Spleen (tissue), 13 donors: ENCODE measurements at regions of chr9 and their contacts with region 1.

Region 1: DNA sequence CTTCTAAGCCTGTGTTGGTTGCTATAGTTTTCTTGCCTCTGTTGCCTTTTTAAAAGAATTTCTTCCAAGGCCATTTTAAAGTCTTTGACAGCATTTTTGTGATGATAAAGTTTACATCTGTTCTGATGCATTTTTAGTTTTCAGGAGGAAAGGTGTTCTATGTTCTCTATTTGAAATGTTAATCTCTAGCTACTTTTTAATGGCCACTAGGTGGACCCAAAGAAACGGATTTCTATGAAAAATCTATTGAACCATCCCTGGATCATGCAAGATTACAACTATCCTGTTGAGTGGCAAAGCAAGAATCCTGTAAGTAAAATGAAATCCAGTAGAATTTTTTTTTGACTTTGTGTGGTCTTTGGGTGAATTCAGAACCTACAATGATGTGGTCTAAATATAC is 60.2 kb downstream of the MELK start:
- DNase-seq: no peak
- H3K4me3 ChIP-seq: no peak overlapping the region
- H3K27ac ChIP-seq: no peak overlapping the region
- H3K4me1 ChIP-seq: no peaks in the 10 kb centered on the region
- H3K27me3 ChIP-seq: no peaks in the 10 kb centered on the region
- CTCF ChIP-seq: peak in 8 of 11 experiments; percentile 17 to 51 (median 40)
- POLR2A ChIP-seq: no peak

Region 2: GRCh38 chr9:36543916-36544315 is 89.0 kb before region 1 on chr9:
- intact Hi-C with region 1: no loop called
- DNase-seq: no peak
- H3K4me3 ChIP-seq: no peak overlapping the region
- H3K27ac ChIP-seq: no peak overlapping the region
- H3K4me1 ChIP-seq: no peaks in the 10 kb centered on the region
- H3K27me3 ChIP-seq: peaks cover 0 to 3% (median 0%) of the 10 kb centered on the region in 7 donors
- CTCF ChIP-seq: no peak
- POLR2A ChIP-seq: no peak

Region 3: DNA sequence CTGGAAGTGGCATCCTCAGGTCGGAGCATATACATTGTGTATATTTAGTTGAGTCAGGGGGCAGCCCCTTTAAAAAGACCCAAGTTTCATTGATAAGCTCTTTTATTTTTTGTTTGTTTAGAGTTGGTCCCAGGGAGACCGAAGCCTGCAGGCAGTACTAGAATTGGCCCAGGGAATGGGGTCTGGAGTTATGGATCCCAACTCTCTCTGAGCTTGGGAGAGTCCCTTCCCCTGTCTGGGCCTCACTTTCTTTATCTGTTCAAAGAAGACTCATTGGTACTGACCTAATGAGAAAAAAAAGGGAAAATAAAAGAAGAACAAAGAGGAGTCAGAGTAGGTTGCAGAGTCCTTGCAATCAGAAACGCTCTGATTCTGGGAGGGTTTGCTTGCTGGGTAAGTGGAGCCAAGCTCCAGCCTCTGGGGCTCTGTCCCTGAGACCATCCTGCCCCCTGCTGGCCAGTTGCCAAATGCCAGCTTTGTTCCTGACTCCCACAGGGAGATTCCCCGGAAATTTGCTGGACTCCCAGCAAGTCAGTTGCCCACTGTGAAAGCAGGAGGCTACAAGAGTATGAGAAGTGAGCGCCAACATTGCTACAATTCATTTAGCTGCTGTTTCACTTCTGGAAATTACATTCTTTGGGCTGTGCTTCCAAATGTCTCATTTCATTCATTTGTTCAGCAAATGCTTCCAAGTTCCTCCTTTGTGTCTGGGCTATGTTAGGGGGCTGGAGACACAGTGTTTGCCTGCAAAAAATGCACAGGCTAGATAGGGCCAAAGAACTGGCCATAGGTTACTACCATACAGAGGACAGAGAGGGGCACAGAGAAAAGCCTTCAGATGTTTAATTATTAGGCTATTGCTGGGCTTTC is 96.0 kb after region 1 on chr9:
- intact Hi-C with region 1: loop called (anchors 10 kb)
- DNase-seq: peak; percentile 87
- H3K4me3 ChIP-seq: no peak overlapping the region
- H3K27ac ChIP-seq: no peak overlapping the region
- H3K4me1 ChIP-seq: peaks cover 0 to 4% (median 0%) of the 10 kb centered on the region in 6 donors
- H3K27me3 ChIP-seq: no peaks in the 10 kb centered on the region
- CTCF ChIP-seq: peak; percentile 24 to 83 (median 64)
- POLR2A ChIP-seq: no peak

Region 4: DNA sequence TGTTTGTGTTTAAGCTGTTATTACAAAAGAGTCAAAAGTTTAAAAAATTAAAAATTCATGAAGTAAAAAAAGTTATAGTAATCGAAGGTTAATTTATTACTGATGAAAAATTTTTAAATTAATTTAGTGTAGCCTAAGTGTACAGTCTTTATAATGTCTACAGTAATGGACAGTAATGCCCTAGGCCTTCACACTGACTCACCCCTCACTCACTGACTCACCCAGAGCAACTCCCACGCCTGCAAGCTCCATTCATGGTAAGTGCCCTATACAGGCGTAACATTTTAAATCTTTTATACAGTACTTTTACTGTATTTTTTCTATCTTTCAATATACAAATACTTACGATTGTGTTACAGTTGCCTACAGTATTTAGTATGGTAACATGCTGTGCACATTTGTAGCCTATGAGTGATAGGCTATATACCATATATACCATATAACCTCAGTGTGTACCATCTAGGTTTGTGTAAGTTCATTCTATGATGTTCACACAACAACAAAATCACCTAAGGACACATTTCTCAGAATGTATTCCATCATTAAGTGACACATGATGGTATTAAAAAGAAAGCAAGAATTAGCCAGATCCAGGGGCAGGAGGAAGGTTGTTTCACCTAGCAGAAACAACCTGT is 1207.8 kb after region 1 on chr9:
- intact Hi-C with region 1: no loop called
- DNase-seq: no peak
- H3K4me3 ChIP-seq: no peak overlapping the region
- H3K27ac ChIP-seq: no peak overlapping the region
- H3K4me1 ChIP-seq: no peaks in the 10 kb centered on the region
- H3K27me3 ChIP-seq: no peaks in the 10 kb centered on the region
- CTCF ChIP-seq: no peak
- POLR2A ChIP-seq: no peak